ENCODE measurements at regions of chr4 and their contacts with region 1.

Region 1: DNA sequence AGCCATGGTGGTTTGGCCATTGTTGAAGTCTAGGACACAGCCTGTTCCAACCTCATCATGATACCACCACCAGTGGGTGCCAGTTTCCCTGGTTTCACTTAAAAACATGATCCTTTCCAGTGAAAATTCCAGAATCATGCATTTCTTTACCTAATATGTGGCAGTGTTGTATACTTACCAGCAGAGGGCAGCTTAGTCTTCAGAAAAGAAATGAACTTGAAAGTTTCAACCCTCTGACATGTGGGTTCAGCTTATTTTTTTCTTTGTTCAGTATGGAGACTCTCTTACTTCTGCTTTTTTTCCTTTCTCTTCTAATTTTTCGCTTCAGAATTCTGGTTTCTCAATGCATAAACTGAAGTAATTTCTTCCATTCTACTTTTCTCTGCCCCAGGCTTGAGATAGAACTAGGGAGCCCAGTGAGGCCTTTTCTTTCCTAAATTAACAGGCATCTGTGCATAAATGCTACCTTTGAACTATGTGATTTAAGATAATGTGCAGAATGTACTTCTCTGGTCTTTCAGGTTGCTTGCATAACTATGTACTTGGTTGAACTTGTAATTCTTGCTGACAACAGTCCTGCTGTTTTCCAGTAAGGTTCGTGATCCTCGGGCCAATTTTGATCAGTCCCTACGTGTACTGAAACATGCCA is 10.7 kb downstream of the LIAS start:
- DNase-seq: peak; percentile 80
- H3K4me3 Mint-ChIP-seq: no peak overlapping the region
- H3K27ac Mint-ChIP-seq: no peak overlapping the region
- H3K4me1 Mint-ChIP-seq: peaks cover 13% of the 10 kb centered on the region
- H3K27me3 Mint-ChIP-seq: no peaks in the 10 kb centered on the region
- CTCF ChIP-seq: peak; percentile 71

Region 2: DNA sequence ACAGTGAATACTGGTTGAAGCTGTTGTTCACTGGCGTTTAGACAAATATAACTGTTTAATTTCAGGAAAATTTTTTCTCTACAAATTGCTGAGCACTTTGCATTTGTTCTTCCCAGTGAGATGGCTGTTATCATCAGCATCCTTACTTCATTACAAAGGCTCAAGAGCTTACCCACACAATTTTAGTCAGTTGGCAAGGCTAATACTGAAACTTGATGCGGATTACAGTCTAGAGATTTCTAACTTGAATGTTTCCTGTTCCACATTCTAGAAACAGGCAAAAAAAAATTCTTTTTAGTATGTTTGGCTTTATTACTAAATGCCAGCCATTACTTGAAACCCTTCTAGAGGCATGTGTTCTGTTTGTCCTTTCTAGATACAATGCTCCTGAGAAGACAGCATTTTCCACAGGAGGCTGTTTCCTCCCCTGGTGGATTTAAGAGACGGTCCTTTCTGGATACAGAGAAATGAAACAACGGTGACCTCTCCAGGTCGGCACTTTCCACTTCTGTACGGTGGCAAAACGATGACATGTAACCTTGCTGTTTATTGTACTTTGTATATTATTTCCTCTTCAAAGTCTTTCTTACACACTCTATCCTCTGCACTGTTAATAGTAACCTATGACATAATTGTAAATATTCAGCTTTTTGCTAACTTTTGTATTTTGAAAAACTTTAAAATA is 184.3 kb before region 1 on chr4:
- CTCF ChIA-PET with region 1: no interaction called
- POLR2A ChIA-PET with region 1: no interaction called
- intact Hi-C with region 1: no loop called
- DNase-seq: no peak
- H3K4me3 Mint-ChIP-seq: no peak overlapping the region
- H3K27ac Mint-ChIP-seq: no peak overlapping the region
- H3K4me1 Mint-ChIP-seq: no peaks in the 10 kb centered on the region
- H3K27me3 Mint-ChIP-seq: no peaks in the 10 kb centered on the region
- CTCF ChIP-seq: no peak

Region 3: GRCh38 chr4:39527273-39528060 is 57.9 kb after region 1 on chr4 and contains the start of gene UGDH:
- CTCF ChIA-PET with region 1: interaction called, 3 read pairs
- POLR2A ChIA-PET with region 1: interaction called, 5 read pairs
- intact Hi-C with region 1: loop called (anchors 5 kb)
- DNase-seq: peak; percentile 98
- H3K4me3 Mint-ChIP-seq: peak within 1 kb of the TSS; percentile 98
- H3K27ac Mint-ChIP-seq: peak within 1 kb of the TSS; percentile 94
- H3K4me1 Mint-ChIP-seq: peaks cover 9% of the 10 kb centered on the region
- H3K27me3 Mint-ChIP-seq: no peaks in the 10 kb centered on the region
- CTCF ChIP-seq: no peak
- total RNA-seq, gene UGDH: 50.9 and 61.7 TPM in 2 replicates

Region 4: GRCh38 chr4:39541987-39542610 is 72.5 kb after region 1 on chr4:
- CTCF ChIA-PET with region 1: interaction called, 10 read pairs
- POLR2A ChIA-PET with region 1: no interaction called
- intact Hi-C with region 1: no loop called
- DNase-seq: no peak
- H3K4me3 Mint-ChIP-seq: no peak overlapping the region
- H3K27ac Mint-ChIP-seq: no peak overlapping the region
- H3K4me1 Mint-ChIP-seq: peaks cover 20% of the 10 kb centered on the region
- H3K27me3 Mint-ChIP-seq: peaks cover 10% of the 10 kb centered on the region
- CTCF ChIP-seq: no peak

Region 5: DNA sequence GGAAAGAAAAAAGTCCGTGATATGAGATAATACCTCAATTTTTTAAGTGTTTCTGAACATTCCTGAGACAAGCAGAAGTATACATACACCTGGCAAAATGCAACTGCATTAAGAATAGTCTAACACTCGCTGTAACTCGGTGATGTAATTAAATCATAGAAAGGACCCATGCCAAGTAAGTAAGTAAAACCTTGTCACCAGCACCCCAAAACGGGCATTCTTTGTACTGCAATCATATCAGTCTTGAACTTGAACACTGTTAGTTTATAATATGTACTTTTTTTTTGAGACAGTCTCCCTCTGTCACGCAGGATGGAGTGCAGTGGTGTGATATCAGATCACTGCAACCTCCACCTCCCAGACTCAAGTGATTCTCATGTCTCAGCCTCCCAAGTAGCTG is 121.7 kb after region 1 on chr4:
- CTCF ChIA-PET with region 1: interaction called, 19 read pairs
- POLR2A ChIA-PET with region 1: no interaction called
- intact Hi-C with region 1: loop called (anchors 1 kb)
- DNase-seq: peak; percentile 68
- H3K4me3 Mint-ChIP-seq: no peak overlapping the region
- H3K27ac Mint-ChIP-seq: no peak overlapping the region
- H3K4me1 Mint-ChIP-seq: no peaks in the 10 kb centered on the region
- H3K27me3 Mint-ChIP-seq: no peaks in the 10 kb centered on the region
- CTCF ChIP-seq: peak; percentile 43

Region 6: DNA sequence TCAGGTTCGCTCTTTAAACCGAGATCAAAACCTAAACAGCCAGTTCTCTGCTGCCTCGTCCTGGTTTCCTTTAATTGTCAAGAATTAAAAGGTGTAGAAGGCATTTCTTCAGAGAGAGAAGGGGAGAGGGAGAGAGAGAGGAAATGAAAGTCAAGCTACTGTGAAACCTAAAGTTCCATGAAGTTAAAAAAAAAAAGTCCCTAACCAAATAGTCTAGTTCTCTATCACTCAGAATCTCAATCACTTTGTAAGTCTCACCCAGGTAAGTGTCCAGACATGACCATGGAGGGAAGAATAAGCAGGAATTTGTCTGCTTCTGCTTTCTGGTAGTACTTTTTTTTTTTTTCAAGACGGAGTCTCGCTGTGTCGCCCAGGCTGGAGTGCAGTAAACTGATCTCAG is 187.9 kb after region 1 on chr4:
- CTCF ChIA-PET with region 1: interaction called, 7 read pairs
- POLR2A ChIA-PET with region 1: no interaction called
- intact Hi-C with region 1: loop called (anchors 1 kb)
- DNase-seq: no peak
- H3K4me3 Mint-ChIP-seq: no peak overlapping the region
- H3K27ac Mint-ChIP-seq: no peak overlapping the region
- H3K4me1 Mint-ChIP-seq: peaks cover 17% of the 10 kb centered on the region
- H3K27me3 Mint-ChIP-seq: no peaks in the 10 kb centered on the region
- CTCF ChIP-seq: no peak

Measured in MCF 10A (cell line).